ENCODE measurements at regions of chr12 and their contacts with region 1.

Region 1: GRCh38 chr12:49331380-49332222 is 5.4 kb downstream of the C1QL4 start:
- DNase-seq: no peak
- H3K4me3 ChIP-seq: no peak overlapping the region
- CTCF ChIP-seq: peak; percentile 84

Region 2: DNA sequence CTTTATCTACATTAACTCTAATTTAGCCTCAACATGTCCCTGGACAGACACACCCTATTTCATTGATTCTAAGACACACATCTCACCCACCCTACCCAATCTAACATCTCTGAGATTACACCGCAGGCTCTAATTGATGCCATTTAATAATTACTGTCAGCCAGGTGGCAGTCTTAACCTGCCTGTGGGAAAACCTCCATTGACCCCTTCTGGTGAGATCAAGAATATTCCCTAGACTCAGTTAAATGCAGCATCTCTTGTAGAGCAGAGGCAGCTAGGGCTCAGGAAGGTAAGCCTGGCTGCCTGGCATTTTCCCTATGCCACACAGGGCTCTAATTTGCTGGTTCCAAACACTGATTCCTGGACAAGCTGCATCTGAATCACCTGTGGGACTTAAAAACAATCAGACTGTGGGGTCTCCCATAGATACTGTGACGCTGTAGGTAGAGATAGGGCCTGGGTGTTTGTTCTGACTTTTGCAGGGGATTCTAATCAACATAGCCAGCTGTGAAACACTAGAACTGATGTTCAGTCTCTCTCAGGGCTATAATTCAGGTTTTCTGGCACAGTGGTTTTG is 222.0 kb after region 1 on chr12:
- CTCF ChIA-PET with region 1: interaction called, 11 read pairs
- POLR2A ChIA-PET with region 1: no interaction called
- DNase-seq: no peak
- H3K4me3 ChIP-seq: no peak overlapping the region
- CTCF ChIP-seq: peak; percentile 16

Measured in AG04449 (cell line).